GM10248 (cell line): ENCODE measurements at regions of chr7 and their contacts with region 1.

Region 1: DNA sequence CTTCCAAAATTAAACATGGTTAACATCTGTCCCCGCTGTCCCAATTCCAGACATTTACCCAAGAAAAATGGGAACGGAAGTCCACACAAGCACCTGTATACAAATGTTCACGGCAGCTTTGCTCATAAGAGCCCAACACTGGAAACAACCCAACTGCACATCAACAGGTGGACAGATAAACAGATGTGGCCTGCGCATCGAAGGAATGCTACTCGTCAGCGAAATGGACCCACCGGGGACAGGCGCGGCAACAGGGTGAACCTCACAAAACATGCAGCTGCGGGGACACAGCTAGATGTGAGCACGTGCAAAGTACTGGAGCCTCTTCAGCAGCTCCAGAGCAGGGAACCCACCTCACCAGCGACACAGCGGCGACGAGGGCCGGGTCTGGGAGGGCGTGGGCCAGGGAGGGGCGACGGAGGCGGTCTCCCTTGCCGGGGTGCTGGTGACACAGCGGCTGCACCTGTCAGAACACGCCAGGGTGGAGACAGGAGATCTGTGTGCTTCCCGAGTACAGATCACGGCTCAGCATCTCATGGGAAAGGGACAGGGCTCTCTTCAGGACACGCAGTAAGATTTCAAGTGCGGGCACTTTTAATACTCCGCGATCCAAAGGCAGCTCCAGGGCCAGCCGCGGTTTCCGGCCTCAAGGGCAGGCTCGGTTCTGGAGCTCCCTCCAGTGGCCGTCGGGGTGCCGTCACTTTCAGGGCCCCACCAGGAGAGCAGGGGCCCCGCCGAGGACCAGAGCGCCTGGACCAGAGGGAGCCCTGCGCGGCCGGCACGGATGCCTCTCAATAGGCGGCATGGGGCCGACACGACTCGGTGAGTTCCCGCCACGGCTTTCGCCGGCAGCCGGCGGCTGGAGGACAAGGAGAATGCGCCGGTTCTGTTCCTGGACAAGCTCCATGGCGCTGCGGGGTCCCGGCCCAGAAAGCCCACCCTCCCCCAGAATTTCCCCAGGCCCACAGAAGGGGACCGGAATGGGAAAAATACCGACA is 21.2 kb downstream of the GPR146 start:
- DNase-seq: peak; percentile 92
- CTCF ChIP-seq: peak; percentile 94

Region 2: DNA sequence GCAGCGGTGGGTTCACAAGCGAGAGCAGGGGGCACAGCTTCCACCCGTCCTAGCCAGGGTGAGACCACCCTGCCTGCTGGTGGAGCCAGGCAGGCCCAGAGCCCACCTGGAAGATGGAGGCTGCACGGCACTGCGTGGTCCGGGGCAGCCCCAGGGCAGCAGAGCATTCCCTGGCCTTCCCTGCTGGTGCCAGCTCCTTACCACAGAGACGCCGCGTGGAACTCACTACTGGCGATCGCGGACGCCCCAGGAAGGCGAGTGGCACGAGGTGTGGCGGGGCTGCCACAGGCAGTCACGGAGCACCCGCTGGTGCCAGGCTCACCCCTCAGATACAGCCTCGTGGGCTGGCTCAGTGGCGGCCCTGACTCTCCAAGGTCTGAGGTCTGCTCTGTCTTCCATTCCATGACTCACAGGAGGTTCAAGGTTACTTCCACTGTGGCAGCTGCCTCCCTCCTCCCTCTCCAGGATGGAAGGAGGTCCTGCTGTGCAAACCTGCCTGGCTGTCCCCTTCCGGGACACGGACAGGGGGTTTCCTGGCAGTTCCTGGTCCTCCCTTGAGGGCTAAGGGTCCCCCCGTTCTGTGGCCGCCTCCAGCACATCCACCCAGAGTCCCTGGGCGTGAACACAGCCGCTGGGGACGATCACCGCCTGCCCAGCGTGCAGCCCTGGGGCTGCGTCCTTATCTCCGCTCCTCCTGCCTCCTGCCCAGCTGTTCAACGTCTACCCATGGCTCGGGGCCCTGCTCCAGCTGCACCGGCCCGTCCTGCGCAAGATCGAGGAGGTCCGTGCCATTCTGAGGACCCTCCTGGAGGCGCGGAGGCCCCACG is 79.4 kb before region 1 on chr7:
- CTCF ChIA-PET with region 1: interaction called, 391 read pairs
- POLR2A ChIA-PET with region 1: no interaction called
- DNase-seq: no peak
- CTCF ChIP-seq: no peak

Region 3: GRCh38 chr7:1022801-1023465 is 42.6 kb before region 1 on chr7:
- CTCF ChIA-PET with region 1: interaction called, 11 read pairs
- POLR2A ChIA-PET with region 1: no interaction called
- DNase-seq: no peak
- CTCF ChIP-seq: no peak

Region 4: DNA sequence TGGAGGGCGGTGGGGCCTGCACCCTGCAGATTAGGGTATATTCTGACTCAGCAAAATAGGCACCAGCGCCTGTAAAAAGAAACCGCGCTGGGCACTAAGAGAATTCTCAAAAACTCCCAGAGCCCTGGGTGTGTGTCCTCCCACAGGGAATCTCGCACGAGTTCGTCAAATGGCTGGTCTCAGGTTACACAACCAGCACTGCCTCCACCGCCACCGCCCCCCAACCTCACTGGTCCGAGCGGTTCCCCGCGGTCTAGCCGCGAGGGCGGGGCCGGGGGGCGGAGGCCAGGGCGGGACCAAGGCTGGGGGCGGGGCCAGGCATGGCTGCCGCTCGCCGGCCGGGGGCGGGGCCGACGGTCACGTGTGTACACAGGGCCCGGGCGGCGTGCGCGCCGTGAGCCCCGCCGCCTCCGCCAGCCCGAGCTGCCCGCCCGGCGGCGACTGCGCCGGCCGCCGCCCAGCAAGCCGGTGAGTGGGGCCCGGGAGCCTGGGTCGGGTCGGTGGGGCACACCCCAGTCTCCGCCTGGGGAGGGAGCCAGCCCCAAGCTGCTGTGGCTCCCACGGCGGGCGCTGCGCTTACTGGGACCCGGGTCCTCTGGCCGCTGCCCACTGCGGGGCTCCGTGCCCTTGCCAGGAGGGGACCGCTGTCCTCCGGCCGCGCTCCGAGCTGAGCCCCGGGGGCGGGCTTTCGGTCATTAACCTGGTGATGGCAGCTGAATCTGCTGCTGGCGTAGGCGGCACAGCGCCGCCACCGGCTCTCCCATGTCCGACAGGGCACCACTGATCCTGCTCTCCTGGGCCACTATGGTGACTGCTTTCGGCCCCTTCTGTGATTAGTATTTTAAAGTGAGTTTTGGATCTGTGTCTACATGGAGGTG is 21.1 kb before region 1 on chr7 and contains the start of gene GPR146:
- CTCF ChIA-PET with region 1: interaction called, 40 read pairs
- POLR2A ChIA-PET with region 1: no interaction called
- DNase-seq: peak; percentile 100
- CTCF ChIP-seq: peak; percentile 61

Region 5: GRCh38 chr7:1076181-1077072 is 10.9 kb after region 1 on chr7:
- CTCF ChIA-PET with region 1: interaction called, 14 read pairs
- POLR2A ChIA-PET with region 1: no interaction called
- DNase-seq: no peak
- CTCF ChIP-seq: no peak

Region 6: DNA sequence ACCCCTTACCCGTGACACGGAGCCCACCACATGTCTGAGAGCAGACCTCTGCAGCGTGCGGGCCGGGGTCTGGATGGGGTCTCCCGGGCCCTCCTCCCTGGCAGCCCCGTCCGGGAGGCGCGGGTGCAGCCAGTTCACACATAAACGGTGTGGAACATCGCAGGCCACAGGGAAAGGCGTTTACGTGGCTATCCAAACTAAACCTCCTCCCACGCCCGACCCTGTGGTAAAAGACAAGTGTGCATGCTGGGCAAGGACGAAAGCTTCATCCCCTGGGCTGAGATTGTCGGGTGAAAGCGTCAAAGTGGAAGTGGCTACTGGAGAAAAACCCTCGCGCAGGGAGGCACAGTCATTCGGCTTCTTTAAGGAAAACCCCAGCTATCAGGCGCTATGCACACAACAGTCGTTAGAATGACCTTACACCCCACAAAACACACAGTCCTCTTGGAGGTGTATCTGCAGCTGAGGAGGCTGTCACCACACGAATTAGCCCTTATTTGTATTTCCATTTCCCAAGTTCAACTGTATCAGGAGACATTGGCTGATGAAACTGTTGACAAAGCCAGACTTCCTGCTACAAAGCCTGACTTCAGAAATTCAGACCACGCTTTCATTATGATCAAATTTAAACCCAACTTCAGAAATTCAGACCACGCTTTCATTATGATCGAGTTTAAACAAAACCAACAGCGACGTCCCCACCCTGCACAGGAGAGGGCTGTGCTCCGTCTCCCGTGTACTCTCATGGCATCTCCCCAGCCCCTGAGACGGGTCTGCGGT is 37.6 kb after region 1 on chr7:
- CTCF ChIA-PET with region 1: interaction called, 16 read pairs
- POLR2A ChIA-PET with region 1: no interaction called
- DNase-seq: peak; percentile 74
- CTCF ChIP-seq: no peak

Region 7: GRCh38 chr7:1175967-1176851 is 110.6 kb after region 1 on chr7:
- CTCF ChIA-PET with region 1: interaction called, 21 read pairs
- POLR2A ChIA-PET with region 1: no interaction called
- DNase-seq: peak; percentile 86
- CTCF ChIP-seq: peak; percentile 92

Region 8: GRCh38 chr7:1432411-1433082 is 367.0 kb after region 1 on chr7:
- CTCF ChIA-PET with region 1: no interaction called
- POLR2A ChIA-PET with region 1: no interaction called
- DNase-seq: peak; percentile 84
- CTCF ChIP-seq: peak; percentile 99